MCF 10A (cell line): ENCODE measurements at regions of chr13 and their contacts with region 1.

Region 1: DNA sequence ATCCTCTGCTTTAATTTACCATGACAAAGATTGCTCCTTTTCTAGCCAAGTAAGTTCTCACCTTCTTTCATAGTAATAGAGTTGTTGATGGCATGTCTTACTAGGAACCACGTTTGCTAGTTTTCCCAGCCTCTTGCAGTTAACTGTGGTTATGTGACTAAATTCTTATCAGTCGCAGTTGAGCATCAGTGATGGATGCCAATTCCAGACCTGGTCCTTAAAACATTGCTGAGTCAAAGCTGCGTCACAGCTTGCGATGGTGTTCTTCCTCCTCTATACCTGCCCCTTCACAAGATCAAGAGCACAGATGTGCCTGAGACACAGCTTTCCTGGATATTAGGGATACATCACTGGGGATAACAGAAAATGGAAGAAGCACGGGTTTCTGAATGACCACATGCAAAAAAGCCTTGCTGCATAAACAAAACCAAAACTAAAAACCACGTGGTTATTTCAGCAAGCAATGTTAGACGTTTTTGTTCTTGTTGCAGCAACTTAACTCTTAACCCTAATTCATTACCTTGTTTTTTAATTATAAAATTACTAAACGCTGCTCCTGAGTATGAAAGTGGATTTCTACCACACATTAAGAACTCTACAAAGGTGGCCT is 97.6 kb upstream of the DACH1 start:
- DNase-seq: no peak
- H3K4me3 Mint-ChIP-seq: no peak overlapping the region
- H3K27ac Mint-ChIP-seq: no peak overlapping the region
- H3K4me1 Mint-ChIP-seq: peaks cover 5% of the 10 kb centered on the region
- H3K27me3 Mint-ChIP-seq: peaks cover 48% of the 10 kb centered on the region
- CTCF ChIP-seq: no peak

Region 2: GRCh38 chr13:72004784-72005374 is 40.3 kb after region 1 on chr13:
- CTCF ChIA-PET with region 1: no interaction called
- POLR2A ChIA-PET with region 1: no interaction called
- intact Hi-C with region 1: loop called (anchors 10 kb)
- DNase-seq: no peak
- H3K4me3 Mint-ChIP-seq: no peak overlapping the region
- H3K27ac Mint-ChIP-seq: no peak overlapping the region
- H3K4me1 Mint-ChIP-seq: no peaks in the 10 kb centered on the region
- H3K27me3 Mint-ChIP-seq: peaks cover 14% of the 10 kb centered on the region
- CTCF ChIP-seq: no peak

Region 3: DNA sequence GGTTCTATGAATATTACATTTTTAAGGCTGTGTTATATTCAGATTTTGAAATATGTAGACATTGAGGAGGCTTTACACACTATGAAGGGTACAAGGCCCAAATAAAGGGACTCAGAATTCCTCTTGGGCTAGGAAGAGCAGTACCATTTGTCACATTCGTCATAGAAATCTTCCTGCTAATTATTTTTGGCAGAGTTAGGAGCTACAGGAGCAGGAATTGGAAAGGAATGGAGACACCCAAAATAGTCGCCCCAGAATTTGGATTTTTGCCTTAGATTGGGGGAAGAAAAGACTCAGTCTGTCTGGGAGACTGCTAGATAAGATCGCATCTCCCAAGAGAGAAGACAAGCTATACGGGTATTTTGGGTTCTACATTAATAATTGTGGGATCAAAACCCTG is 78.8 kb after region 1 on chr13:
- CTCF ChIA-PET with region 1: no interaction called
- POLR2A ChIA-PET with region 1: no interaction called
- intact Hi-C with region 1: no loop called
- DNase-seq: no peak
- H3K4me3 Mint-ChIP-seq: no peak overlapping the region
- H3K27ac Mint-ChIP-seq: no peak overlapping the region
- H3K4me1 Mint-ChIP-seq: no peaks in the 10 kb centered on the region
- H3K27me3 Mint-ChIP-seq: no peaks in the 10 kb centered on the region
- CTCF ChIP-seq: no peak